Sigmoid colon (tissue), 7 donors: ENCODE measurements at regions of chr12 and their contacts with region 1.

Region 1: GRCh38 chr12:116455540-116456329 is 103.4 kb upstream of the MAP1LC3B2 start:
- DNase-seq: peak; percentile 96
- H3K4me3 ChIP-seq: no peak overlapping the region
- H3K27ac ChIP-seq: peak overlapping the region; percentile 79 to 86 (median 84)
- H3K4me1 ChIP-seq: peaks cover 0 to 38% (median 35%) of the 10 kb centered on the region in 4 donors
- H3K27me3 ChIP-seq: no peaks in the 10 kb centered on the region
- CTCF ChIP-seq: no peak
- EP300 ChIP-seq: peak; percentile 78 to 96 (median 90)
- POLR2A ChIP-seq: no peak

Region 2: GRCh38 chr12:115998119-115998633 is 457.6 kb before region 1 on chr12:
- intact Hi-C with region 1: loop called (anchors 5 kb)
- DNase-seq: no peak
- H3K4me3 ChIP-seq: no peak overlapping the region
- H3K27ac ChIP-seq: peak overlapping the region in 3 of 4 donors; percentile 49 to 59 (median 59)
- H3K4me1 ChIP-seq: peaks cover 0 to 23% (median 16%) of the 10 kb centered on the region in 4 donors
- H3K27me3 ChIP-seq: no peaks in the 10 kb centered on the region
- CTCF ChIP-seq: peak; percentile 52 to 88 (median 70)
- EP300 ChIP-seq: no peak
- POLR2A ChIP-seq: no peak

Region 3: GRCh38 chr12:116099652-116100432 is 355.9 kb before region 1 on chr12:
- intact Hi-C with region 1: no loop called
- DNase-seq: no peak
- H3K4me3 ChIP-seq: no peak overlapping the region
- H3K27ac ChIP-seq: no peak overlapping the region
- H3K4me1 ChIP-seq: peaks cover 0 to 22% (median 4%) of the 10 kb centered on the region in 4 donors
- H3K27me3 ChIP-seq: no peaks in the 10 kb centered on the region
- CTCF ChIP-seq: no peak
- EP300 ChIP-seq: no peak
- POLR2A ChIP-seq: no peak

Region 4: GRCh38 chr12:116159175-116159574 is 296.6 kb before region 1 on chr12:
- intact Hi-C with region 1: no loop called
- DNase-seq: no peak
- H3K4me3 ChIP-seq: no peak overlapping the region
- H3K27ac ChIP-seq: no peak overlapping the region
- H3K4me1 ChIP-seq: peaks cover 0 to 63% (median 38%) of the 10 kb centered on the region in 4 donors
- H3K27me3 ChIP-seq: no peaks in the 10 kb centered on the region
- CTCF ChIP-seq: no peak
- EP300 ChIP-seq: no peak
- POLR2A ChIP-seq: no peak

Region 5: DNA sequence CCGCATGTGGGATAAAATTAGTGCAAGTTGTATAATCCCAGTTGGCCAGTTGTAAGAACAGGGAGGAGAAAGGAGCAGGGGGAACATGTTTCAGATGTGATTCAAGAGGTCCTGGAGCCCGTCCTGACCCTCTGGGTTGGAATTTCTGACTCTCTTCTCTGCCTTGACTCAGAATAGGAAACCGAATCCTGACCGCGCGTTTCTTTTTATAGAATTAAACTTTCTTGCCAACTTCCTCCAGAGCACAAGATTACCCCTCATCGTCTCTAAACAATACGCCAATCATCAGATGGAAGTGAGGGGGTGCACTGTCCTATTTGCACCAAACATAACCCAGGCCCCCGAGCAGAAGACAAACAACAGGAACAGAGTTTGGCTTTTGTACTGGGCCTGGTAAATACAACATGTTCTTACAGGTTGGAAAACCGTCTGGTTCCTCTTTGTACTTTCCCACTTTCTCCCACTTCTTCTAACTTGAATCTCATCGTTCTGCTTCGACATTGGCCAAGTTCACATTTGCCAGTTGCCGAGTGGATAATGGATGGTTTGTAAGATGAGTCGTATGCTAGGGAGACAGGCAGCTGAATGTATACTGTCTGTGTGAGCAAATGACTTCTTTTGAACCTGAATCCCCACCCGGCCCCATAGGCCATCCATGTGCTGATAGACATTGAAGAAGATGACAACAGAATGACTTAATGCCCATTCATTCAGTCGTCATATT is 135.7 kb before region 1 on chr12:
- intact Hi-C with region 1: loop called (anchors 1 kb)
- DNase-seq: peak; percentile 96
- H3K4me3 ChIP-seq: peak overlapping the region in 2 of 4 donors; percentile 13 to 15
- H3K27ac ChIP-seq: peak overlapping the region; percentile 82 to 90 (median 88)
- H3K4me1 ChIP-seq: peaks cover 3 to 33% (median 30%) of the 10 kb centered on the region in 4 donors
- H3K27me3 ChIP-seq: no peaks in the 10 kb centered on the region
- CTCF ChIP-seq: no peak
- EP300 ChIP-seq: peak; percentile 86 to 97 (median 94)
- POLR2A ChIP-seq: no peak

Region 6: GRCh38 chr12:116358893-116359761 is 96.6 kb before region 1 on chr12:
- intact Hi-C with region 1: loop called (anchors 5 kb)
- DNase-seq: peak; percentile 96
- H3K4me3 ChIP-seq: no peak overlapping the region
- H3K27ac ChIP-seq: peak overlapping the region; percentile 71 to 82 (median 77)
- H3K4me1 ChIP-seq: peaks cover 0 to 18% (median 13%) of the 10 kb centered on the region in 4 donors
- H3K27me3 ChIP-seq: no peaks in the 10 kb centered on the region
- CTCF ChIP-seq: no peak
- EP300 ChIP-seq: no peak
- POLR2A ChIP-seq: no peak

Region 7: GRCh38 chr12:116382686-116383531 is 72.8 kb before region 1 on chr12:
- intact Hi-C with region 1: no loop called
- DNase-seq: peak; percentile 93
- H3K4me3 ChIP-seq: no peak overlapping the region
- H3K27ac ChIP-seq: peak overlapping the region in 3 of 4 donors; percentile 45 to 62 (median 55)
- H3K4me1 ChIP-seq: peaks cover 0 to 34% (median 19%) of the 10 kb centered on the region in 4 donors
- H3K27me3 ChIP-seq: no peaks in the 10 kb centered on the region
- CTCF ChIP-seq: no peak
- EP300 ChIP-seq: no peak
- POLR2A ChIP-seq: no peak

Region 8: GRCh38 chr12:116434155-116435011 is 21.4 kb before region 1 on chr12:
- intact Hi-C with region 1: loop called (anchors 1 kb)
- DNase-seq: peak; percentile 95
- H3K4me3 ChIP-seq: peak overlapping the region in 3 of 4 donors; percentile 14 to 30 (median 18)
- H3K27ac ChIP-seq: peak overlapping the region; percentile 69 to 89 (median 80)
- H3K4me1 ChIP-seq: peaks cover 0 to 31% (median 23%) of the 10 kb centered on the region in 4 donors
- H3K27me3 ChIP-seq: no peaks in the 10 kb centered on the region
- CTCF ChIP-seq: no peak
- EP300 ChIP-seq: peak; percentile 45 to 92 (median 69)
- POLR2A ChIP-seq: no peak

Region 9: GRCh38 chr12:116525418-116526001 is 69.8 kb after region 1 on chr12:
- intact Hi-C with region 1: loop called (anchors 2 kb)
- DNase-seq: peak; percentile 92
- H3K4me3 ChIP-seq: peak overlapping the region in 3 of 4 donors; percentile 11 to 36 (median 22)
- H3K27ac ChIP-seq: peak overlapping the region; percentile 80 to 86 (median 81)
- H3K4me1 ChIP-seq: peaks cover 0 to 31% (median 23%) of the 10 kb centered on the region in 4 donors
- H3K27me3 ChIP-seq: no peaks in the 10 kb centered on the region
- CTCF ChIP-seq: no peak
- EP300 ChIP-seq: peak in 1 of 4 donors; percentile 6
- POLR2A ChIP-seq: no peak

Region 10: DNA sequence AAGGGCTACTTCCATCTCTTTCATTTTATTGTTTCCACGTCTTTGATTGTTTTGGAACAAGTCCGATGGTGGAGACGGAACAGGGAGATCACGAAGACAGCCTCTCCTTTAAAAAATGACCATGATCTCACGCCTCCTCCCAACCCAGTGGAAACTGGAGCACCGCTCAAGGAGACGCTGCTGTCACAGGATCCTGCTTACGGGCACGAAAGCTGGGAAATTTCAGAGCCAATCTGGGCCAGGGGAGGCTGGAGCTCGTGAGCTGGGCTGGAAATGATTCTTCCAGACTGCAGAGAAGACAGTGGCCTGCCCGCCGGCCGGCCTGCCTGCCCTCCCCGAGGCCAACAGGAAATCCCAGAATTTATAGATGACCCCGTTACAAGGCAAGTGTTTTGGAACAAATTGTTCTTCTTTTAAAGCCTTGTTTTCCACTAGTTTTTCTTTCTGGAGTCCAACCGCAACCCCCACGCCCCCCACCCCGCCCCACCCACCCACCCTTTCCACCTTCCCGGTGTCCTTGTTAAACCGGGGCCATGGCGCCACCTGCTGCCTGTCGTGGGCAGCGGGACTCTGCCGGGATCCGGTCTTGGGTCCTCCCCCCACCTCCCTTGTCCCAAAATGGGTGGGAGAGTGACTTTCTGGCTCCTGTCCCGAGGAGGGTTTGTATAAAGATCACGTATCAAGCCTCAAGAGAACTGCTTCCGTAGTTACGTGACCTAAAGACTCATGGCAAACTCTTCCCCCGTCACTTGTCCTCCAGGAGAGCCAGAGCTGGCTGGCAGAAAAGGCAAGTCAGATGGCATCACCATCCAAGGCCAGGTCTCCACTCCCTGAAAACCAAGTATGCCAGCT is 143.8 kb after region 1 on chr12:
- intact Hi-C with region 1: loop called (anchors 5 kb)
- DNase-seq: peak; percentile 94
- H3K4me3 ChIP-seq: peak overlapping the region in 3 of 4 donors; percentile 26 to 40 (median 35)
- H3K27ac ChIP-seq: peak overlapping the region; percentile 75 to 86 (median 81)
- H3K4me1 ChIP-seq: peaks cover 0 to 37% (median 22%) of the 10 kb centered on the region in 4 donors
- H3K27me3 ChIP-seq: no peaks in the 10 kb centered on the region
- CTCF ChIP-seq: peak; percentile 11 to 81 (median 18)
- EP300 ChIP-seq: peak in 2 of 4 donors; percentile 74 to 79
- POLR2A ChIP-seq: no peak